Right ventricle myocardium inferior (tissue), 1 donor: ENCODE measurements at regions of chr1 and their contacts with region 1.

Region 1: GRCh38 chr1:91617285-91617765 is 116.7 kb downstream of the CDC7 start:
- DNase-seq: peak; percentile 74
- ATAC-seq: peak; percentile 84

Region 2: DNA sequence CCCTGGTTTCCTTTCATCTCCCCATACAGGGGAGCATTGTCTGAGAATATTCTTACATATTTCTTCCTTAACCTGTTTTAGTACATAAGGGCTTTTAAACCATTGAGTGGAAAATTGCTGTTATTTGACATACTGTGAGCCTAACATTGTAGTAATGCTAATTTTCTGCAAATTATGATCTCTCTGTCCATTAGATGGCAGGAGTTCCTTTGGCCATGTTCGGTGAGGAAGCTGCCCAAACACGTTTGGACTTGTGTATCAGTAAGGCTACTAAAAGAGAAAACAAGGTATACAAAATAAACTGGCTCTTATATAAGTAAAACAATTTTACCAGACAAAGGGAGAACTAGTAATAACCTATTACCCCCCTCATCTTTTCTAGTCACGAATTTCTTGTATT is 87.5 kb before region 1 on chr1:
- intact Hi-C with region 1: loop called (anchors 5 kb)
- DNase-seq: no peak
- ATAC-seq: no peak